Naive thymus-derived CD4-positive, alpha-beta T cell (primary cell): ENCODE measurements at regions of chr14 and their contacts with region 1.

Region 1: GRCh38 chr14:23320774-23321571 is at the start of gene PABPN1:
- DNase-seq: peak; percentile 87 to 100 (median 99)
- ATAC-seq: peak; percentile 91
- H3K4me3 ChIP-seq: peak within 1 kb of the TSS; percentile 84
- H3K4me3 Mint-ChIP-seq: peak within 1 kb of the TSS; percentile 91 to 97 (median 93)
- H3K27ac ChIP-seq: peak within 1 kb of the TSS; percentile 96
- H3K27ac Mint-ChIP-seq: peak within 1 kb of the TSS; percentile 96 to 99 (median 98)
- H3K4me1 ChIP-seq: peaks cover 22% of the 10 kb centered on the region in 2 donors
- H3K4me1 Mint-ChIP-seq: peaks cover 22 to 38% (median 32%) of the 10 kb centered on the region in 7 donors
- H3K27me3 ChIP-seq: no peaks in the 10 kb centered on the region
- H3K27me3 Mint-ChIP-seq: peaks cover 0 to 3% (median 0%) of the 10 kb centered on the region in 5 donors
- total RNA-seq, gene PABPN1: 176 to 213 (median 196) TPM

Region 2: DNA sequence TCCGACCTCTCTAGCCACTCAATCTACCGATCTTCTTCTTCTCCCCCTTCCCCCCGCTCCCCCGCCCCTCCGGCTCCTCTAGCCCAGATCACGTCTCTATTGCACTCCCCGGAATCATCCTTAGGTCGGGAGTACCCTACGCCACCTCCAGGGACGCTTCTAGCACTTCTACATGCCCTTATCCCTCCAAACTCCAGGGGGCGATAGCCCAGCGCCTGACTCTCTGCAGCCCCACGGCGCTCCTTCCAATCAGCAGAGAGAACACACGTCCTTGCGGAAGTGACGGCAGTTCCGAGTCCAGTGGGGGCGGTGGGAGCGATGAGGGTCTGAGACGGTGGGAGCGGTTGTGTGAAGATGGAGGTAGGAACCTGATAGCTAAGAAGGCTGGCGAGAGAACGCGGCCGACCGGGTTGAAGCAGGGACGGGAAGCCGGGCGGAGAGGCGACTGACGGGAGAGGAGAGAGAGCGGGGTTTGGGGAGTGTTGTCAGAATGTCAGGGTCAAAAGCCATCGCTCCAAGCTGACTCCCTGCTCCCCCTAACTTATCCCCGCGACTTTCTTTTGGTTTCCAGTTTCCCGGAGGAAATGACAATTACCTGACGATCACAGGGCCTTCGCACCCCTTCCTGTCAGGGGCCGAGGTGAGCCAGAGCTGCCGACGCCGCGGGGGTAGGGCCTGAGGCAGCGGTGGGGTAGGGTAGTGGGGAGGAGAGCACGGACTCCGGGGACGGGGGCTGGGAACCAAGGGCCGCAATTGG is 1843.9 kb before region 1 on chr14 and contains the starts of genes RAB2B and TOX4:
- CTCF ChIA-PET with region 1: no interaction called
- POLR2A ChIA-PET with region 1: interaction called, 3 read pairs
- intact Hi-C with region 1: loop called in 1 of 2 experiments (anchors 2 kb)
- DNase-seq: peak; percentile 83 to 98 (median 97)
- ATAC-seq: peak; percentile 99
- H3K4me3 ChIP-seq: peak within 1 kb of the TSS; percentile 99
- H3K4me3 Mint-ChIP-seq: peak within 1 kb of the TSS; percentile 96 to 100 (median 99)
- H3K27ac ChIP-seq: peak within 1 kb of the TSS; percentile 88
- H3K27ac Mint-ChIP-seq: peak within 1 kb of the TSS; percentile 93 to 100 (median 98)
- H3K4me1 ChIP-seq: peaks cover 21 to 22% of the 10 kb centered on the region in 2 donors
- H3K4me1 Mint-ChIP-seq: peaks cover 18 to 74% (median 58%) of the 10 kb centered on the region in 7 donors
- H3K27me3 ChIP-seq: no peaks in the 10 kb centered on the region
- H3K27me3 Mint-ChIP-seq: no peaks in the 10 kb centered on the region
- total RNA-seq, gene RAB2B: 26.6 to 32.8 (median 30.5) TPM
- total RNA-seq, gene TOX4: 78.5 to 116 (median 86.5) TPM

Region 3: DNA sequence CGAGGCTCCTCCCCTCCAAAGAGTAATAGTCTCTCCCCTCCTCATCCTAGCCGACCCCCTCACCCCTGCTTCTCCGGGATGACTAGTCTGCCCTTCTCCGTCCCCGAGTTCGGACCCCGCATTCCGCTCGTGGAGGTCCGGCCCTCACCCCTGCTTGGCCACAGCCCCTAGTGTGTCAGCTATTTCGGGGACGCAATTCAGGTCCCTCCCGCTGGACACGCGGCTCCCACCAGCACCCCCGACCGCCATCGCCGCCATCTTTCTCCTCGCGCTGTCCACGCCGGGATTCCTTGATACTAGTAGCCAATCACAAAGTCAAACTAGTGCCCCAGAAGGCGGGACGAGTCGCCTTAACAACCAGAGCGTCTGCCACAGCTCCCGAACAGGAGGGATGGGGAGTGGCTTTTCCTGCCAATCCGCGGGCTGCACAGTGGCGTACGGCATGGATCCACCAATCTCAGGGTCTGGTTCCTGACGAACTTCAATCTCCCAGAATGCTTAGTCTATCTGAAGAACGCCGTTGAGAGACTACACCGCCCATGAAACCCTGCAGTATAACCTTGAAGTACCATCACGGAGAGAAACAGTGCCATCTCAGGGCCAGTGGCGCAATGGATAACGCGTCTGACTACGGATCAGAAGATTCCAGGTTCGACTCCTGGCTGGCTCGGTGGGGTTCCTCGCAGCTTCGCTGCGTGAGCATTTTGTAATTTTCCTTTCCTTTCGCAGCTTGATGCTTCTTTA is 391.7 kb before region 1 on chr14 and contains the start of gene PRMT5:
- CTCF ChIA-PET with region 1: no interaction called
- POLR2A ChIA-PET with region 1: no interaction called
- intact Hi-C with region 1: loop called in 1 of 2 experiments (anchors 2 kb)
- DNase-seq: peak; percentile 81 to 100 (median 99)
- ATAC-seq: peak; percentile 97
- H3K4me3 ChIP-seq: peak within 1 kb of the TSS; percentile 91
- H3K4me3 Mint-ChIP-seq: no peak within 1 kb of the TSS
- H3K27ac ChIP-seq: peak within 1 kb of the TSS; percentile 91
- H3K27ac Mint-ChIP-seq: no peak within 1 kb of the TSS
- H3K4me1 ChIP-seq: peaks cover 9 to 17% of the 10 kb centered on the region in 2 donors
- H3K4me1 Mint-ChIP-seq: peaks cover 5 to 36% (median 20%) of the 10 kb centered on the region in 7 donors
- H3K27me3 ChIP-seq: no peaks in the 10 kb centered on the region
- H3K27me3 Mint-ChIP-seq: no peaks in the 10 kb centered on the region
- total RNA-seq, gene PRMT5: 24.9 to 82.8 (median 34.2) TPM

Region 4: DNA sequence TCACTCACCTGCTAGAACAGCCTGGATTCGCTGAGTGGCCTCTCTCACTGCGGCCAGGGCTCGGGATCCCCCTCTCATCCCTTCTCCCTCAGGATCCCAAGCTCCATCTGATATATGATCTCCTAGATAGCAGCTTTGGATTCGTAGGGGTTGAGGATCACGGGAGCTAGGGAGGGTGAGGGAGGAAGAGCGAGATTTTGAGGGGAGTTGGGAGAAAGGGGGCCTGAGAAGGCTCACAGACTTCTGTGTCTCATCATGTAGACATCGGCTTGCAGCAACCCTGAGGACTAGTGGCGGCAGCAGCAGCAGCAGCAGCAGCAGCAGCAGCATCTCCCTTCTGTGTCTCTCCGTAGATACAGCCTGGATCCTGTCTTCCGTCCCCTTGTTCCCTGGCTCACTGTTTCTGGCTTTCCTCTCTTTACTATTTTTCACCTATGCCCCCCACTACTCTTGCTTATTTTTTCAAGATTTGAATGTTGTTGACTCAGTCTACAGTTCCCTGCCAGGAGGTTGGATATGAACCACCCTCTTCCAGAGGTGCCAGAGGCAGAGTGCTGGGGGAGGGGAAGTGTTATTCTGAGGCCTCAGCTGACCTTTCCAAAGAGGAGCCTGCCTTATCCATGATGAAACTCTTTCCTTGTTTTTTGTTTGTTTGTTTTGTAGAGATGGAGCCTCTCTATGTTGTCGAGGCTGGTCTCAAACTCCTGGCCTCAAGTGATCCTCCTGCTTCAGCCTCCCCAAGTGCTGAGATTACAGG is 216.2 kb before region 1 on chr14 and contains the start of gene CIROP:
- CTCF ChIA-PET with region 1: no interaction called
- POLR2A ChIA-PET with region 1: no interaction called
- intact Hi-C with region 1: no loop called
- DNase-seq: no peak
- ATAC-seq: no peak
- H3K4me3 ChIP-seq: no peak within 1 kb of the TSS
- H3K4me3 Mint-ChIP-seq: no peak within 1 kb of the TSS
- H3K27ac ChIP-seq: no peak within 1 kb of the TSS
- H3K27ac Mint-ChIP-seq: peak within 1 kb of the TSS in 3 of 9 donors; percentile 45 to 80 (median 73)
- H3K4me1 ChIP-seq: no peaks in the 10 kb centered on the region
- H3K4me1 Mint-ChIP-seq: peaks cover 0 to 11% (median 0%) of the 10 kb centered on the region in 7 donors
- H3K27me3 ChIP-seq: no peaks in the 10 kb centered on the region
- H3K27me3 Mint-ChIP-seq: peaks cover 0 to 7% (median 0%) of the 10 kb centered on the region in 5 donors
- total RNA-seq, gene CIROP: not detected

Region 5: DNA sequence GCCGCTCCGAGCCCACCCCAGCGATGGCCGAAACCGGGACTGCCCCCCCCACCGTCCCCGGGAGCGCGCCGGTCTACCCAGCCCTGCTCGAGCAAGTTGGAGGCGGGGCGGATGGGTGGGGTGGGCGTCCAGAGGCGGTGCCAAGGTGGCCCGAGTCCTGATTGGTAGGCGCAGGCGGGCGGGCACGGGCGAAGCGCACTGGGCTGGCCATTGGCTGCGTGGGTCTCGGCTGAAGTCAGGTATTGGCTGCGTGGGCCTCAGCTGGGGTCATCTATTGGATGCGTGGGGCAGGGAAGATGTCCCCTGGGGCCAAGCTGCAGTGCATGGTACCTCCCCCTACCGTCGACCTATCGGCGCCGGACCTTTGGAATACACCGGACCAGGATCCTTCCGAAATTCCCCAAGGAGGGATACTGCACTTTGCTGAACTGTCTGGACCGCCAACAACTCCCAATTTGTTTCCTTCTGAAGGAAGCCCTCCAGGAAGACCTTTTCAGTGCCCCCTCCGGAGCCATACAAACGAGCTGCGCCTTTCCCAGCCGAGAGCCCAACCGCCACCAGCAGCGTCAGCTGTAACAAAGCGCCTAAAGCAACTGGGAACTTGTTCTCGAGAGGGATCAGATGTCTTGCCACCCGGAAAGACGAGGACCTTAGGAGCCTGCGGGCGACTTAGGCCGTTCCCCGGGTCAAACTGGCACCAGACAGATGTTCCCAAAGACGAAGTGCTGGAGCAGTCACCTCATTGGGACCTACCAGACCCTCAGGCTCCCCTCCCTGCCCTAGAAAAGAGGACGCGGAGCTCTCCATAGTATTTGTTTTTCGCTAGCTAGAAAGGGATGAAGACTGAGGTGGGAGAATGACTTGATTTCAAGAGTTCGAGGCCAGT is 34.7 kb before region 1 on chr14 and contains the start of gene HOMEZ:
- CTCF ChIA-PET with region 1: interaction called, 3 read pairs
- POLR2A ChIA-PET with region 1: interaction called, 42 read pairs
- intact Hi-C with region 1: loop called (anchors 1 kb)
- DNase-seq: peak; percentile 89 to 97 (median 94)
- ATAC-seq: peak; percentile 99
- H3K4me3 ChIP-seq: peak within 1 kb of the TSS; percentile 84
- H3K4me3 Mint-ChIP-seq: peak within 1 kb of the TSS; percentile 92 to 100 (median 96)
- H3K27ac ChIP-seq: peak within 1 kb of the TSS; percentile 89
- H3K27ac Mint-ChIP-seq: peak within 1 kb of the TSS; percentile 83 to 98 (median 93)
- H3K4me1 ChIP-seq: peaks cover 3 to 6% of the 10 kb centered on the region in 2 donors
- H3K4me1 Mint-ChIP-seq: peaks cover 15 to 37% (median 30%) of the 10 kb centered on the region in 7 donors
- H3K27me3 ChIP-seq: no peaks in the 10 kb centered on the region
- H3K27me3 Mint-ChIP-seq: no peaks in the 10 kb centered on the region
- total RNA-seq, gene HOMEZ: 5.2 to 20.4 (median 15.5) TPM

Region 6: DNA sequence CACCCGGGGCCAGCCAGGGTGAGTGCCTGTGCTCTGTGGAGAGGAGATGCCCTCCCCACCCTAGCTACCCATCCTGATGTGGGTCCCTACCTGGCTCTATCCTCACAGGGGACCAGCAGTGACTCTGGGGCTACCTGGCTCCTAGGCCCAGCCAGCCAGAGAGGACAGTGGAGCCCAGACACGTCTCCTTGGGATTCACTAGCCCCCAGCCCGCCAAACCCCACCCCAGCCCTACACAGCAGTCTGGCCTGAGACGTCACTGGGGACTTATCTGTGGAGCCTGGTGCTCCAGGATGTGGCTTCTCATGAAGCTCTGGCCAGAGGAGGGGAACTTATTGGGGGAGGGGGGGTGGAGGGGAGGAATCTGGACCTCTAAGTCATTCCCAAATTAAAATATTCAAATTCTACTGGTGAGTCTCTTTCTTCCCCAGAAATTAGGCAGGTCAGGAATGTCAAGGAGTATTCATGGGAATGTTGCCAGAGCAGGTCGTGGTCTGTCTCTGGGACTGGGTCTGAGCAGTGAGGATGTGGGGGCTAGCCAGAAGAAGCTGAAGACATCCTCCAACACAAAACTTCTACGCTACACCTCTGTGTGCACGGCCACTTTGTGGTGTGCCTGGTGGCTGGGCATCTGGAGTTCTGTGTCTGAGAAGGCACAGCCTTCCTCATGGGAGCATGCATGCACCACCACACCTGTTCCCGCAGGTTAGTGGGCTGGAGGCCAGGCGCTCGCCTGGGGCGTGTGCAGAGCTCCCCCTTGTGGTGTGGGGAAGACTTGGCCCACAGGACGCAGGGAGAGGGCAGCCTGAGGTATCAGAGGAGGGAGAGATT is 58.6 kb after region 1 on chr14:
- CTCF ChIA-PET with region 1: interaction called, 30 read pairs
- POLR2A ChIA-PET with region 1: no interaction called
- intact Hi-C with region 1: loop called in 1 of 2 experiments (anchors 2 kb)
- DNase-seq: peak; percentile 48 to 77 (median 68)
- ATAC-seq: peak; percentile 86
- H3K4me3 ChIP-seq: no peak overlapping the region
- H3K4me3 Mint-ChIP-seq: no peak overlapping the region
- H3K27ac ChIP-seq: no peak overlapping the region
- H3K27ac Mint-ChIP-seq: no peak overlapping the region
- H3K4me1 ChIP-seq: no peaks in the 10 kb centered on the region
- H3K4me1 Mint-ChIP-seq: peaks cover 0 to 3% (median 0%) of the 10 kb centered on the region in 7 donors
- H3K27me3 ChIP-seq: no peaks in the 10 kb centered on the region
- H3K27me3 Mint-ChIP-seq: peaks cover 0 to 16% (median 0%) of the 10 kb centered on the region in 5 donors

Region 7: DNA sequence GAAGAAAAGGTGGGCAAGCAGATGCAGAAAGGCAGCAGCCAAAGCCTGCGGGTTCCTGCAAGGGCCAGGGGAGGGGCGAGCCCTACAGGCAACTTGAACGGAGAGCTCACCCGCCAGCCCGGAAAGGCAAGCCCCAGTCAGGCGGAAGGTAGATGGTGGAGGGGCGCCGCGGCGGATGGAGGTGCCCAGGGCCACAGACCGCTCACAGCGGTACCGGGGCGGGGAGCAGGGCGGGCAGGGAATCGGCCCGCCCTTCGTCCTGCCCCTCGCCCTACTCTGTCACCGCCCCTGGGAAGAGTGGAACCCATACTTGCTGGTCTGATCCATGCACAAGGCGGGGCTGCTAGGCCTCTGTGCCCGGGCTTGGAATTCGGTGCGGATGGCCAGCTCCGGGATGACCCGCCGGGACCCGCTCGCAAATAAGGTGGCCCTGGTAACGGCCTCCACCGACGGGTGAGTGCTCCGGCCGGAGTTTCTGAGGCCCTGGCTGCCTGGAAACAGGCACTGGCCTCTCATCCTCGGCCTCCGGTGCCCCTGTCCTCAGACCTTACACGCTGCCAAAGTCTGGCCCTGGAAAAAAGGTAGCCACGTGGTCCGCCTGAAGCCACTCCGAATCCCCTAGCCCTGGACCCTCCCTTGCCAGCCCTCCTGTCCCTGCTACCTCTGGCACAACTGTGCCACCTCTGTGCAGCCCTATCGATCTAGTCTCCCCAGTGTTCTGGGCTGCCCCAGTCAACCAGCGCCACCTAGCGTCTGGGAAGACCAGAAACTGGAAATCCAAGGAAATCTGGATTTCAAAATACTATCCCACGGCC is 632.7 kb after region 1 on chr14 and contains the start of gene DHRS4:
- CTCF ChIA-PET with region 1: no interaction called
- POLR2A ChIA-PET with region 1: no interaction called
- intact Hi-C with region 1: loop called in 1 of 2 experiments (anchors 5 kb)
- DNase-seq: peak; percentile 63 to 84 (median 80)
- ATAC-seq: peak; percentile 94
- H3K4me3 ChIP-seq: peak within 1 kb of the TSS; percentile 77
- H3K4me3 Mint-ChIP-seq: peak within 1 kb of the TSS; percentile 94 to 100 (median 98)
- H3K27ac ChIP-seq: peak within 1 kb of the TSS; percentile 80
- H3K27ac Mint-ChIP-seq: peak within 1 kb of the TSS; percentile 70 to 94 (median 89)
- H3K4me1 ChIP-seq: peaks cover 8 to 17% of the 10 kb centered on the region in 2 donors
- H3K4me1 Mint-ChIP-seq: peaks cover 18 to 35% (median 27%) of the 10 kb centered on the region in 7 donors
- H3K27me3 ChIP-seq: no peaks in the 10 kb centered on the region
- H3K27me3 Mint-ChIP-seq: peaks cover 0 to 1% (median 0%) of the 10 kb centered on the region in 5 donors
- total RNA-seq, gene DHRS4: 7.8 to 19.9 (median 17.5) TPM